PC-9 (cell line): ENCODE measurements at regions of chr2 and their contacts with region 1.

Region 1: GRCh38 chr2:157876066-157876787 is at the start of gene ACVR1:
- DNase-seq: peak; percentile 80 to 86
- H3K4me3 ChIP-seq: peak within 1 kb of the TSS; percentile 82
- H3K27ac ChIP-seq: no peak within 1 kb of the TSS
- H3K4me1 ChIP-seq: peaks cover 16% of the 10 kb centered on the region
- H3K27me3 ChIP-seq: no peaks in the 10 kb centered on the region
- CTCF ChIP-seq: no peak
- total RNA-seq, gene ACVR1: 8.6 and 8.9 TPM in 2 replicates

Region 2: DNA sequence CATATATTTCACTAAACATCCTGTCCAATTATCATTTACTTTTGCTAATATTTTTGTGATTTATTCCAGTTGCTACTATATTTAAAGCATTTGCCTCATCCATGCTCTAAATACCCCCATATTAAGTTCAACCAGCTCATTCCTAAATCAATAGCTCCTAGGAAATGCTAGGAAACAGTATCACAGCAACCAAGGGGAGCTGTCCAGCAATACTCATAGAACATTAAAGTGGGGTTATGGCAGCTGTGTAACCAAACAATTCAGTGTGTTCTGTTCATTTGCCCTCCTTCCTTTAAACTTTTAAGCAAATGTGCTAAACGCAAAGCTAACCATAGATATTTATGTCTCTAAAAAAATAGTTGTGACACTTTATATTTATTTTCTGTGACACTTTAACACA is 288.7 kb before region 1 on chr2:
- CTCF ChIA-PET with region 1: no interaction called
- POLR2A ChIA-PET with region 1: no interaction called
- intact Hi-C with region 1: no loop called
- DNase-seq: no peak
- H3K4me3 ChIP-seq: no peak overlapping the region
- H3K27ac ChIP-seq: no peak overlapping the region
- H3K4me1 ChIP-seq: no peaks in the 10 kb centered on the region
- H3K27me3 ChIP-seq: no peaks in the 10 kb centered on the region
- CTCF ChIP-seq: no peak

Region 3: GRCh38 chr2:157784169-157784822 is 91.9 kb before region 1 on chr2:
- CTCF ChIA-PET with region 1: no interaction called
- POLR2A ChIA-PET with region 1: no interaction called
- intact Hi-C with region 1: loop called (anchors 5 kb)
- DNase-seq: peak; percentile 25 to 49
- H3K4me3 ChIP-seq: no peak overlapping the region
- H3K27ac ChIP-seq: no peak overlapping the region
- H3K4me1 ChIP-seq: no peaks in the 10 kb centered on the region
- H3K27me3 ChIP-seq: no peaks in the 10 kb centered on the region
- CTCF ChIP-seq: no peak

Region 4: GRCh38 chr2:157830696-157831570 is 45.3 kb before region 1 on chr2:
- CTCF ChIA-PET with region 1: no interaction called
- POLR2A ChIA-PET with region 1: no interaction called
- intact Hi-C with region 1: loop called (anchors 5 kb)
- DNase-seq: peak in 1 of 2 experiments; percentile 82
- H3K4me3 ChIP-seq: no peak overlapping the region
- H3K27ac ChIP-seq: peak overlapping the region; percentile 92
- H3K4me1 ChIP-seq: peaks cover 26% of the 10 kb centered on the region
- H3K27me3 ChIP-seq: no peaks in the 10 kb centered on the region
- CTCF ChIP-seq: no peak

Region 5: GRCh38 chr2:157898591-157898996 is 22.4 kb after region 1 on chr2:
- CTCF ChIA-PET with region 1: no interaction called
- POLR2A ChIA-PET with region 1: no interaction called
- intact Hi-C with region 1: loop called (anchors 1 kb)
- DNase-seq: peak; percentile 2 to 52
- H3K4me3 ChIP-seq: no peak overlapping the region
- H3K27ac ChIP-seq: no peak overlapping the region
- H3K4me1 ChIP-seq: no peaks in the 10 kb centered on the region
- H3K27me3 ChIP-seq: no peaks in the 10 kb centered on the region
- CTCF ChIP-seq: no peak

Region 6: GRCh38 chr2:158006961-158007719 is 130.9 kb after region 1 on chr2:
- CTCF ChIA-PET with region 1: no interaction called
- POLR2A ChIA-PET with region 1: no interaction called
- intact Hi-C with region 1: loop called (anchors 2 kb)
- DNase-seq: no peak
- H3K4me3 ChIP-seq: no peak overlapping the region
- H3K27ac ChIP-seq: no peak overlapping the region
- H3K4me1 ChIP-seq: peaks cover 11% of the 10 kb centered on the region
- H3K27me3 ChIP-seq: no peaks in the 10 kb centered on the region
- CTCF ChIP-seq: no peak